ENCODE measurements at regions of chr4 and their contacts with region 1.

Region 1: GRCh38 chr4:146333187-146333894 is 119.0 kb downstream of the REELD1 start:
- DNase-seq: no peak
- ATAC-seq: no peak
- H3K4me3 ChIP-seq: no peak overlapping the region
- H3K27ac ChIP-seq: no peak overlapping the region
- H3K4me1 ChIP-seq: peaks cover 0 to 23% (median 1%) of the 10 kb centered on the region in 12 donors
- H3K27me3 ChIP-seq: no peaks in the 10 kb centered on the region
- CTCF ChIP-seq: no peak
- POLR2A ChIP-seq: no peak

Region 2: GRCh38 chr4:145870155-145871020 is 463.0 kb before region 1 on chr4:
- intact Hi-C with region 1: no loop called
- DNase-seq: no peak
- ATAC-seq: peak in 1 of 4 donors; percentile 55
- H3K4me3 ChIP-seq: no peak overlapping the region
- H3K27ac ChIP-seq: no peak overlapping the region
- H3K4me1 ChIP-seq: peaks cover 0 to 32% (median 10%) of the 10 kb centered on the region in 12 donors
- H3K27me3 ChIP-seq: no peaks in the 10 kb centered on the region
- CTCF ChIP-seq: no peak
- POLR2A ChIP-seq: no peak

Region 3: GRCh38 chr4:146243141-146243882 is 90.0 kb before region 1 on chr4:
- intact Hi-C with region 1: loop called in 3 of 10 experiments (anchors 2 to 5 kb)
- DNase-seq: peak in 2 of 5 donors; percentile 24 to 65
- ATAC-seq: peak in 1 of 4 donors; percentile 21
- H3K4me3 ChIP-seq: peak overlapping the region in 3 of 12 donors; percentile 1 to 38 (median 4)
- H3K27ac ChIP-seq: peak overlapping the region; percentile 76 to 96 (median 85)
- H3K4me1 ChIP-seq: peaks cover 0 to 54% (median 24%) of the 10 kb centered on the region in 12 donors
- H3K27me3 ChIP-seq: no peaks in the 10 kb centered on the region
- CTCF ChIP-seq: peak; percentile 15 to 58 (median 43)
- POLR2A ChIP-seq: no peak

Region 4: DNA sequence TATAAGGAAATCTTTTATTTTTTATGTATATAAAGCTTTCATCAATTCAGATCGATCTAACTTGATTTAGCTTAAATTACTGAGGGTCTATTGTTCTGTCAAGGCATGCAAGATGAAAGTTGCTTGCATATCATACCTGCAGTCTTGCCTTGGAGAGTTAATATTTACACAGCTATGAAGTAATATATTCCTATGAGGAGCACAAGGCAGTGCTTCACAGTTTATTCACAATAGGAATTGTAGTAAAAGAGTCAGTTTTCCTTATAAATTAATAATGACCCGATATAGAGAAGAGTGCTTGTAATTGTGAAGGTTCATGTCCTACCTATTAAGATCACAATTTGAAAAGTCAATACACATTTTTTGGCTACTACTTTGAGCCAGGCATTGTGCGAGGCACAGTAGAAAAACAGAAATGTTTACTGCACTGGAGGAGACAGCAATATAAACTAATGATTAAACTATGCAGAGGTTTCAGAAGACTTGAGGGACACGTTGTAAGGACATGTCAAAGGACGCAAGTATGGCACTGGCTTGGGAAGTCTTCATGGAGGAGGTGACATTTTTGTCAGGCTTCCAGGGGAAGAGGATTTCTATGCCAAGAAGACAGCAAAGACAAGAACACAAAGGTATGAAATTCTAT is 80.3 kb before region 1 on chr4:
- intact Hi-C with region 1: loop called in 3 of 10 experiments (anchors 5 kb)
- DNase-seq: no peak
- ATAC-seq: no peak
- H3K4me3 ChIP-seq: no peak overlapping the region
- H3K27ac ChIP-seq: no peak overlapping the region
- H3K4me1 ChIP-seq: peaks cover 0 to 3% (median 0%) of the 10 kb centered on the region in 12 donors
- H3K27me3 ChIP-seq: no peaks in the 10 kb centered on the region
- CTCF ChIP-seq: no peak
- POLR2A ChIP-seq: no peak

Region 5: DNA sequence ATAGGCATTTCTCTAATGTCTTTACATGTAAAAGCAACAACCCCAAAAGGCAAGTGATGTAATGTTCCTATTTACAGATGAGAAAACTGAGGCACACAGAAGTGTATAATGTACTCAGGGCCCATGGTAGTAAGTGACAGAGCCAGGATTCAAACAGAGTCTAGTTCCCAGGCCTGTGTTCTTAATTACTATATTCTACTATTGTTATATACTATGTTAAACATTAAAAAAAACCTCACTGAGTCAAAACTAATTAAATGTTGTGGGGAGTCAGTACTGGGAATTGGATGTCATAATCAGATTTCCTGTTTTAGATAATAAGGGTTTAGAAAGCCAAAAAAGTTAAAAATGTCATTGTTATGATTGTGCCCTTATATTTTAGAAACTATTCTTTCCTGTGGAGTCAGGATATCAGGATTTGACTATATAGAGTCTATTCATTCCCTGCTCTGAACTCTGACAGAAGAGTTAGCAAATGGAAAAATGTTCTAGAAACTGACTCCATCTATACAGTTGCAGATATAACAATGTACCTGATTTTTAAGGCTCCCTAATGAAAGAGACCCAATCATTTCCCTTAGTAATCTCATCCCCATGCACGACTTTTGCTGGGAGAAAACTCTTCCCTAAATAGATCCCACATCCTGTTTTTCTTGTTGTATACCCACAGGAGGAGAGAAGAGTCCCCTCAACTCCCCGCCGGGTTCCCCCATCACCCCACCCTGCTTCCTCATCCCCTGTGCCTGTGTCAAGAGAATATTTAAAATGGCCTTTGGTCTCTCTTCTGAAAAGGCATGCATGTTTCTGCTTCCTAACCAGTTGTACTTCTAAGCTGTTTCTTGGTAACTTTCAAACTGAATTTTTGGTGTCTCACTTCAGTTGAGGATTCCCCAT is 49.3 kb before region 1 on chr4:
- intact Hi-C with region 1: loop called in 1 of 10 experiments (anchors 10 kb)
- DNase-seq: peak in 1 of 5 donors; percentile 10
- ATAC-seq: peak in 2 of 4 donors; percentile 33 to 34
- H3K4me3 ChIP-seq: no peak overlapping the region
- H3K27ac ChIP-seq: peak overlapping the region in 8 of 12 donors; percentile 4 to 67 (median 42)
- H3K4me1 ChIP-seq: peaks cover 0 to 39% (median 19%) of the 10 kb centered on the region in 12 donors
- H3K27me3 ChIP-seq: no peaks in the 10 kb centered on the region
- CTCF ChIP-seq: no peak
- POLR2A ChIP-seq: no peak